H1 (cell line): ENCODE measurements at regions of chr21 and their contacts with region 1.

Region 1: GRCh38 chr21:45405818-45406762 is 1.1 kb downstream of the COL18A1 start:
- DNase-seq: no peak
- H3K4me3 ChIP-seq: peak overlapping the region; percentile 66 to 77 (median 71)
- H3K27ac ChIP-seq: peak overlapping the region; percentile 44; the same call in 1 of the 2 replicates
- H3K4me1 ChIP-seq: peaks cover 13 to 51% (median 38%) of the 10 kb centered on the region in 4 experiments
- H3K27me3 ChIP-seq: peaks cover 0 to 4% (median 0%) of the 10 kb centered on the region in 4 experiments; a peak in 4 of 7 replicates
- CTCF ChIP-seq: no peak
- EP300 ChIP-seq: no peak
- POLR2A ChIP-seq: no peak
- RAD21 ChIP-seq: no peak

Region 2: GRCh38 chr21:45228171-45228641 is 177.9 kb before region 1 on chr21:
- CTCF ChIA-PET with region 1: no interaction called
- POLR2A ChIA-PET with region 1: no interaction called
- DNase-seq: no peak
- H3K4me3 ChIP-seq: no peak overlapping the region
- H3K27ac ChIP-seq: no peak overlapping the region
- H3K4me1 ChIP-seq: no peaks in the 10 kb centered on the region
- H3K27me3 ChIP-seq: no peaks in the 10 kb centered on the region
- CTCF ChIP-seq: no peak
- EP300 ChIP-seq: no peak
- POLR2A ChIP-seq: no peak
- RAD21 ChIP-seq: no peak

Region 3: GRCh38 chr21:45357436-45358260 is 48.4 kb before region 1 on chr21:
- CTCF ChIA-PET with region 1: interaction called, 16 read pairs
- POLR2A ChIA-PET with region 1: interaction called, 14 read pairs
- DNase-seq: no peak
- H3K4me3 ChIP-seq: no peak overlapping the region
- H3K27ac ChIP-seq: no peak overlapping the region
- H3K4me1 ChIP-seq: peaks cover 6 to 16% (median 11%) of the 10 kb centered on the region in 4 experiments
- H3K27me3 ChIP-seq: no peaks in the 10 kb centered on the region; a peak in 1 of 7 replicates
- CTCF ChIP-seq: peak in 2 of 3 experiments; percentile 46 to 54; a peak in 3 of 4 replicates
- EP300 ChIP-seq: no peak
- POLR2A ChIP-seq: no peak
- RAD21 ChIP-seq: peak; percentile 17 to 48; a peak in 3 of 4 replicates

Region 4: DNA sequence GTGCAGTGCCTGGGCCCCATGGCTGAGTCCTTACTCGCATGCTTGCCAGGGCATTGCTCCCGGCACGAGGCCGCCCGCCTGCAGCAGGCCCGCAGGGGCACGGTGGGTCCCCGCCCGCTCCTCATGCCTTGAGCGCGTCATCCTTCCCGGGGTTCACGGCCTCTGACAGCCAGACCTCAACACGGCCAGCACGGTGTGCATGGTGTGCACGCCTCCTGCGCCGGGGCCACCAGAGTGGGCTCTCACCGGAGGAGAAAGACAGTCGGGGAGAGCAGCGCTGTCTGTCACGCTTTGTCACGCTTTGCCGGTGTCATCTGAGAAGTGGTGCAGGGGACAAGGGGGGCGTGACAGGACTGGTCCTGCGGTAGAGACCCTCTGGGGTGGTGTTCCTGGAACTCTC is 13.1 kb before region 1 on chr21:
- CTCF ChIA-PET with region 1: interaction called, 7 read pairs
- POLR2A ChIA-PET with region 1: interaction called, 10 read pairs
- DNase-seq: no peak
- H3K4me3 ChIP-seq: no peak overlapping the region
- H3K27ac ChIP-seq: no peak overlapping the region
- H3K4me1 ChIP-seq: no peaks in the 10 kb centered on the region; a peak in 1 of 7 replicates
- H3K27me3 ChIP-seq: 0 out of 7 replicates have a peak, but pooled peaks cover 0 to 2% (median 0%) of the 10 kb centered on the region in 4 experiments
- CTCF ChIP-seq: no peak
- EP300 ChIP-seq: no peak
- POLR2A ChIP-seq: no peak
- RAD21 ChIP-seq: no peak

Region 5: DNA sequence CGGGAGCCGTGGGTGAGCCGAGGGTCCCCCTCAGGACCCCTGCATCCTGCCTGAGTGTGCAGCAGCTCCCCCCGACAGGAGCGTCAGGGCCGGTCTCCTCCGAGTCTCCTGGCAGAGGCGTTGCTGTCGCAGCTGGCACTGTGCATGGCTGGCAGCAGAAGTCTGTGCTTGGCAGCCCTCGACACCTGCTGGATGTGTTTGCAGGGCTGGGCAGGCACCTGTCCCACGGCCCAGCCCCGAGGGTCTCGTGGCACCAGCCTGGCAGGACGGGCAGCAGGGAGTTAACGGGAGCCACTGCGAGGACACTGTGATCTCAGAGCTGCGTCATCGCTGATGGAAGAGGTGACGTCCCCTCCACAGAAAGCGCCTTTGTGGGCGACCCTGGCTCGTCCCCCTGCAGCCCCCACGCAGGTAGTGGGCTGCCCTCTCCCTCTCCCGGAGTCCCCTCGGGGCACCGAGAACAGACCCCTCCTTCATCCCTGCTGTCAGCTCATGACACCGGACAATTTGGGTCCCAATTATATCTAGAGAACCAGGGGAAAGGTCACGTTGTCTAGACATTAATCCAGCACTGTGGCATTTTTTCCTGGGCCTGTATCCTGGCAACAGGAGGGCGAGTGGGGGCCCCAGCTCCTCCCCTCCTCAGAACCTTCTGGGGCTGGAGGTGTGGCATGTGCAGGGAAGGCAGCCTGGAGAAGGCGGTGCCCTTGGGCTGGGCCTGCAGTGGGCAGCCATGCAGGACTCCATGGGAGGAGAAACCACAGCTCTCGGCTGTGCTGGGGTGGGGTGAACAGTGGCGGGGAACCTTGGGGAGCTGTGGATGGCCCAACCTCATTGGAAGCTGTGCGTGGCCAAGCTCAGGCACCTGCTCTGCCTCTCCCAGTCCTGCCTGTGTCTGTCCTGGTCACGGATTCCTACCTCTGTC is 14.2 kb after region 1 on chr21:
- CTCF ChIA-PET with region 1: interaction called, 32 read pairs
- POLR2A ChIA-PET with region 1: interaction called, 15 read pairs
- DNase-seq: no peak
- H3K4me3 ChIP-seq: no peak overlapping the region
- H3K27ac ChIP-seq: no peak overlapping the region
- H3K4me1 ChIP-seq: peaks cover 4 to 31% (median 23%) of the 10 kb centered on the region in 4 experiments
- H3K27me3 ChIP-seq: no peaks in the 10 kb centered on the region
- CTCF ChIP-seq: no peak
- EP300 ChIP-seq: no peak
- POLR2A ChIP-seq: no peak
- RAD21 ChIP-seq: no peak

Region 6: DNA sequence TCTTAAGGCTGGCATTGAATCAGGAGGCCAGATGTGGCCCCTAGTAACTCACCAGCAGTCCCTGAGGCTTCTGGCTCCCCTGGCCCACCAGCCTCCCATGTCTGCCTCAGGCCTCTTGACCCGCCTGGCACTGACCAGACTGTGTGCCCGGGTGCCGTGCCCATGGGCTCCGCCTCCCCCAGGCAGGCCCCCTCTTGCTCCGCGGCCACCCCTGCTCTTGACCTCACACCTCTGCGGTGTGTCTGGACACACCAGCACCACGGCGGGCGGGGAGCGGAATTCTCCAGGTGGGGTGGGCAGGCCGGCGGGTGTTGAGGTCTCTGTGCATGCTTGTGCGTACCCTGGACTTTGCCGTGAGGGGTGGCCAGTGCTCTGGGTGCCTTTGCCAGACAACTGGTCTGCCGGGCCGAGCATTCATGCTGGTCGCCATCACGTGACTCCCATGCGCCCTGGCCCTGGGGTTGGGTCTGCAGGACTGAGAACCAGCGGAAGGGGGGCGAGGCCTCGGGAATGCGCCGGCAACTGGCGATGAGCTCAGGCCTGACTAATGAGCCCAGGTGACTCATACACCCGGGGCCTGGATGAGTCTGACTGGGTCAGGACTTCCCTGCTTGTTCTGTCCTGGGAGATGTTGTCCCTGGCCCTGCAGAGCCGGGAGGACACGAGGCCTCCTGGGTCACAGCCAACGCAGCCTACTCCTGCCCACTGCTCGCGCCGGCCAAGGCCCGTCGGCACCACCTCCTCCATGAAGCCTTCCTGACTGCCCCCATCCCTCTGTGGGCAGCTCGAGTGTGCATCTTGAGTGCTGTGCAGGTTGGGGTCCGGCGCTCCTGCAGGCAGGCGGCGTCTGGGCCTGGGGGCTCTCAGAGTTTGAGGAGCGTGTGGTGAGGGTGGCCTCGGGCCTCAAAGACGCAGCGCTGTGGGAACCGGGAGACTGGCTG is 21.5 kb after region 1 on chr21:
- CTCF ChIA-PET with region 1: interaction called, 5 read pairs
- POLR2A ChIA-PET with region 1: interaction called, 13 read pairs
- DNase-seq: peak in 1 of 2 experiments; percentile 67
- H3K4me3 ChIP-seq: no peak overlapping the region
- H3K27ac ChIP-seq: no peak overlapping the region
- H3K4me1 ChIP-seq: peaks cover 0 to 47% (median 40%) of the 10 kb centered on the region in 4 experiments; a peak in 6 of 7 replicates
- H3K27me3 ChIP-seq: no peaks in the 10 kb centered on the region
- CTCF ChIP-seq: no peak
- EP300 ChIP-seq: no peak
- POLR2A ChIP-seq: no peak
- RAD21 ChIP-seq: no peak

Region 7: GRCh38 chr21:45439161-45439872 is 33.2 kb after region 1 on chr21:
- CTCF ChIA-PET with region 1: interaction called, 13 read pairs
- POLR2A ChIA-PET with region 1: interaction called, 6 read pairs
- DNase-seq: peak; percentile 72 to 96
- H3K4me3 ChIP-seq: no peak overlapping the region
- H3K27ac ChIP-seq: no peak overlapping the region
- H3K4me1 ChIP-seq: peaks cover 0 to 8% (median 2%) of the 10 kb centered on the region in 4 experiments; a peak in 3 of 7 replicates
- H3K27me3 ChIP-seq: no peaks in the 10 kb centered on the region
- CTCF ChIP-seq: peak in 2 of 3 experiments; percentile 95 to 97; a peak in 3 of 4 replicates
- EP300 ChIP-seq: no peak
- POLR2A ChIP-seq: no peak
- RAD21 ChIP-seq: peak; percentile 98 to 99

Region 8: GRCh38 chr21:45478115-45478801 is 72.2 kb after region 1 on chr21:
- CTCF ChIA-PET with region 1: no interaction called
- POLR2A ChIA-PET with region 1: no interaction called
- DNase-seq: peak; percentile 49 to 90
- H3K4me3 ChIP-seq: no peak overlapping the region
- H3K27ac ChIP-seq: no peak overlapping the region
- H3K4me1 ChIP-seq: no peaks in the 10 kb centered on the region
- H3K27me3 ChIP-seq: no peaks in the 10 kb centered on the region
- CTCF ChIP-seq: peak in 2 of 3 experiments; percentile 73 to 87; a peak in 3 of 4 replicates
- EP300 ChIP-seq: no peak
- POLR2A ChIP-seq: no peak
- RAD21 ChIP-seq: peak; percentile 46 to 56